Heart right ventricle (tissue), 16 donors: ENCODE measurements at regions of chr5 and their contacts with region 1.

Region 1: GRCh38 chr5:152532714-152533113 is 127.6 kb upstream of the NMUR2 start:
- DNase-seq: peak in 1 of 2 donors; percentile 17
- ATAC-seq: peak in 2 of 8 donors; percentile 22 to 46
- H3K4me3 ChIP-seq: no peak overlapping the region
- H3K27ac ChIP-seq: no peak overlapping the region
- H3K4me1 ChIP-seq: peaks cover 0 to 13% (median 0%) of the 10 kb centered on the region in 9 donors
- H3K27me3 ChIP-seq: no peaks in the 10 kb centered on the region
- CTCF ChIP-seq: peak in 8 of 9 donors; percentile 20 to 69 (median 61)

Region 2: DNA sequence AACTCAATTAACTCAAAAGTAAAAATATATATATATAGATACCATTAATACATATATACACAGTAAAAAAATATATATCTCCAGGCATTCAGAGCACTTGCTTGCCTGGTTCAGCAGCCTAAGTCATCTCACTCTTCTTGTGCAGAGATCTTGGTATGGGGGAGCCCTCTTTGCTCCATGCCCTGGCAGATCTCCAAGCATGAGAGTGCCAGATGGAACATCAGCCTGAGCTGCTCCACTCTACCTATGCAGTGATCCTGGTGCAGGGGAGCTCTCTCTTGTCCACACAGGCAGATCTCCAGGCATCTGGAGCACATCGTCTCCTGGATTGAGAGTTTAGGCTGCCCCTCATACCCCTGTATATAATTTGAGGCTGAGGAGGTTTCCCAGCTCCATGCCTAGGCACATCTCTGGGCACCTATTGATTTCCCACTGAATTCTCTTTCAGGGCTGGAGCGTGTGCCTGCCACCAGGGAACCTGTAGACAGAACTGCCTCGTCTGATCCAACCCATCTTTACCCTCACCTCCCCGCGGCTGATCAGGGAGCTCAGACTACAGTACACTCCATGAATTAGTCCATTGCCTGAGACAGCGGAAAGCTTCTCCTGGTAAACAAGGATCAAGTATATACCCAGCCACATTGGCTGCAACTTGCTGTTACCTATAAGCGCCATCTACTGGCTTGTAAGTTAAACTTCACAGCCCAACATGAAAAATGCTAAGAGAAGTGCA is 615.3 kb after region 1 on chr5:
- intact Hi-C with region 1: loop called in 1 of 10 experiments (anchors 5 kb)
- DNase-seq: no peak
- ATAC-seq: peak in 6 of 8 donors; percentile 38 to 82 (median 60)
- H3K4me3 ChIP-seq: no peak overlapping the region
- H3K27ac ChIP-seq: no peak overlapping the region
- H3K4me1 ChIP-seq: no peaks in the 10 kb centered on the region
- H3K27me3 ChIP-seq: peaks cover 0 to 5% (median 0%) of the 10 kb centered on the region in 7 donors
- CTCF ChIP-seq: peak; percentile 32 to 75 (median 65)

Region 3: GRCh38 chr5:153964880-153965645 is 1432.3 kb after region 1 on chr5:
- intact Hi-C with region 1: loop called (anchors 1 to 10 kb)
- DNase-seq: peak; percentile 20 to 35
- ATAC-seq: peak; percentile 55 to 86 (median 78)
- H3K4me3 ChIP-seq: peak overlapping the region in 2 of 10 donors; percentile 15 to 19
- H3K27ac ChIP-seq: no peak overlapping the region
- H3K4me1 ChIP-seq: no peaks in the 10 kb centered on the region
- H3K27me3 ChIP-seq: peaks cover 0 to 11% (median 0%) of the 10 kb centered on the region in 7 donors
- CTCF ChIP-seq: peak; percentile 67 to 95 (median 86)